ENCODE measurements at regions of chr1 and their contacts with region 1.

Region 1: GRCh38 chr1:152440635-152441471 is 26.8 kb upstream of the CRNN start:
- DNase-seq: peak; percentile 76
- ATAC-seq: peak; percentile 99
- H3K4me3 Mint-ChIP-seq: no peak overlapping the region
- H3K27ac Mint-ChIP-seq: no peak overlapping the region
- H3K4me1 Mint-ChIP-seq: no peaks in the 10 kb centered on the region
- H3K27me3 Mint-ChIP-seq: peaks cover 24% of the 10 kb centered on the region
- CTCF ChIP-seq: peak; percentile 77

Region 2: DNA sequence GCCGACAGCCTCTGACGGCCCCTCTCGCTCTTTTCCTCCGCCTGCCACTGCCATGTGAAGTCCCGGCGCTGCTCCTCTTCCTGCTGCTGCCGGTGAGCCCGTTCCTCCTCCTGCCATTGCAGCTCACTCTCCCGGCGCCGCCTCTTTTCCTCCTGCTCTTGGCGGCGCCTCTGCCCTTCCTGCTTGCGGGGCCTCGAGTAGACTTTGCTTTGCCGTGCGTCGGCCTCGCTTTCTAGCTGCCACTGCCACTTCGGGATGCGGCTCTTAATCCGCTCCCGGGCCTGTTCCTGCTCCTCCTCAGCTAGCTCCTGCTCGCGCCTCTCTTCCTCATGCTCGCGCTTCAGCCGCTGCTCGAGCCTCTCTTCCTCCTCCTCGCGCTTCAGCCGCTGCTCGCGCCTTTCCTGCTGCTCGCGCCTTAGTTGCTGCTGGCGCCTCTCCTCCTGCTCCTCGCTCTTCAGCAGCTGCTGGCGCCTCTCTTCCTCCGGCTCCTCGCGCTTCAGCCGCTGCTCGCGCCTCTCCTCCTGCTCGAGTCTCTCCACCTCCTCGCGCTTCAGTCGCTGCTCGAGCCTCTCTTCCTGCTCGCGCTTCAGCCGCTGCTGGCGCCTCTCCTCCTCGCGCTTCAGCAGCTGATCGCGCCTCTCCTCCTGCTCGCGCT is 329.9 kb before region 1 on chr1:
- CTCF ChIA-PET with region 1: interaction called, 10 read pairs
- POLR2A ChIA-PET with region 1: no interaction called
- intact Hi-C with region 1: no loop called
- DNase-seq: peak; percentile 43
- ATAC-seq: peak; percentile 66
- H3K4me3 Mint-ChIP-seq: no peak overlapping the region
- H3K27ac Mint-ChIP-seq: no peak overlapping the region
- H3K4me1 Mint-ChIP-seq: peaks cover 4% of the 10 kb centered on the region
- H3K27me3 Mint-ChIP-seq: peaks cover 19% of the 10 kb centered on the region
- CTCF ChIP-seq: no peak

Region 3: DNA sequence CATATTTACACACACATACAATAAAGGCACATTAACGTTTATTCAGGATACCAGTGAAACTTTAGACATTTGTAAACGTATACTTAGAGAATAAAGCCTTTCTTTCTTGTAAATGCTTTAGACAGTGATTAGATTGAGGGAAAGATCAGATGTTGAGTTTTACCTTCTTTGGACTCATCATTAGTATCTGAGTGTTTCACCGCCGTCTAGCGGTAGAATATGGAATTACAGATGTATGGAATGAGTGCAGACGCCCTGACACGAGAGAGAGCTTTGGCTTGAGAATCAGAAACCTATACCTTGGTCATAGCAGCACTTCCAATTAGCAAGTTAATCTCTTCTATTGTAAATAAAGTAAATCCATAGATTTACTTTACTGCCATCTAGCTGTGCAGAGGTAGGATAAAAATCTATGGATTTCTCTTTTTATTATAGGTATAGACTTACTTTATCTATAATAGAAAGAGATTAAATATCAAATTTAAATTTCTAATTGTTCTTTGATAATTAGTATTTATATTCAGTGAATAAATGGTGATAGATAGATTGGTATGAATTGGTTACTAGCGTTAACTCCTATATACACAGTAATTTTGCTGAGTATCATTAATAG is 93.6 kb before region 1 on chr1:
- CTCF ChIA-PET with region 1: interaction called, 12 read pairs
- POLR2A ChIA-PET with region 1: no interaction called
- intact Hi-C with region 1: no loop called
- DNase-seq: peak; percentile 63
- ATAC-seq: peak; percentile 79
- H3K4me3 Mint-ChIP-seq: no peak overlapping the region
- H3K27ac Mint-ChIP-seq: no peak overlapping the region
- H3K4me1 Mint-ChIP-seq: peaks cover 7% of the 10 kb centered on the region
- H3K27me3 Mint-ChIP-seq: peaks cover 22% of the 10 kb centered on the region
- CTCF ChIP-seq: peak; percentile 94

Region 4: GRCh38 chr1:152398812-152399698 is 41.8 kb before region 1 on chr1:
- CTCF ChIA-PET with region 1: interaction called, 11 read pairs
- POLR2A ChIA-PET with region 1: no interaction called
- intact Hi-C with region 1: no loop called
- DNase-seq: peak; percentile 31
- ATAC-seq: no peak
- H3K4me3 Mint-ChIP-seq: no peak overlapping the region
- H3K27ac Mint-ChIP-seq: no peak overlapping the region
- H3K4me1 Mint-ChIP-seq: peaks cover under 1% of the 10 kb centered on the region
- H3K27me3 Mint-ChIP-seq: peaks cover 14% of the 10 kb centered on the region
- CTCF ChIP-seq: peak; percentile 45

Region 5: DNA sequence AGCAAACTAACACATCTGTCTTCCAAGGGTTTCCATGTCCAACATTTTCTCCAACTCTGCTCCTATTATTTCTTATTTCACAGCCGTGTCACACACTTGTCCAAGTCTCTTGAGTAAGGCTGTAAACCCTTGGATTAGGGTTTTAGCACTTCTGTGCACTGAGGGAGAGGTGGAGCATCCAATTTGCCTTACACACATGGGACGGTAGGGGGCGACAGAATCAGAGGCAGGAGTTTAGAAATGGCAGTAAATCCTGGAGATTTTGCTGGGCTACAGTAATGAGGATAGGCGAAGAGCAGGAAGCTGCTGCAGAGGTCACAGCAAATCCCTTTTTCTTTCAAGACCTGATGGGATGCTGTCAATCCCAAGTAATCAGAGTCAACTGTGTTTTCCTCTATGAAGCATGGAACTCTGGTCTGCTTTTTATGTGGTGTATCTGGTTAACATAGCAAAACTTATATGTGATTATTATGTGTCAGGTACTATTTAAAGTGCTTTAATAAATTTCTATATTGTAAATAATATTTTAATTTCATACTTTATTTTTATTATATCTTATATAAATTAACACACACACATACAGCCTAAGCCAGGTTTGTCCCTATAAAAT is 54.3 kb after region 1 on chr1:
- CTCF ChIA-PET with region 1: no interaction called
- POLR2A ChIA-PET with region 1: no interaction called
- intact Hi-C with region 1: no loop called
- DNase-seq: peak; percentile 33
- ATAC-seq: no peak
- H3K4me3 Mint-ChIP-seq: no peak overlapping the region
- H3K27ac Mint-ChIP-seq: no peak overlapping the region
- H3K4me1 Mint-ChIP-seq: no peaks in the 10 kb centered on the region
- H3K27me3 Mint-ChIP-seq: peaks cover 7% of the 10 kb centered on the region
- CTCF ChIP-seq: no peak

Measured in activated CD8-positive, alpha-beta T cell treated with anti-CD3 and anti-CD28 coated beads for 36 hours (primary cell).